A673 (cell line): ENCODE measurements at regions of chr17 and their contacts with region 1.

Region 1: DNA sequence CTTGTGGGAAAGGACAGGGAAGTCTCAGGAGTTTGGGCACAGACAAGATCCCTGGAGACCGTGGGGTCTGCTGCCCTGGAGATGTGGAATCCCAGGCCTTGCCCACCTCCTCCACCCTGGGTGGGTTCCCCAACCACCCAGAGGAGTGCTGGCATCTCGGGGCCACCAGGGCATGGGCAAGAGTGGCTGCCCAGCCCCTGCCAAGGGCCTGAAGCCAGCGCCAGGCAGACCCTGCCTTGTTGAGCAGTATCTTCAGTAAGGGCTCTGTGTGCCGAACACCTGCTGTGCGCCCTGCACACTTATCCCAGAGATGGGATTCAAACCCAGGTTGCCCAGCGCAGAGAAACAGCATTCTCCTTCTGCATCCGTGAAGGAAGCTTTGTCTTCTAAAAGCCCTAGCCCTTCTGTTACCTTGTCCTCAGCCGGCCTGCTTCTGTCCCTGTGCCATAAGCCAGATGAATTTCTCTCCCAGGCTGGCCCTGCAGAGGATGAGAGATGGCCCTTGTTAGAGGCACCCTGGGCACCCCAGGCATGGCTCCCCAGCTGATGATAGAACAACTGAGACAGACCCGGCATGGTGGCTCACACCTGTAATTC is 32.4 kb downstream of the TMEM235 start:
- DNase-seq: no peak
- H3K4me3 ChIP-seq: no peak overlapping the region
- H3K27ac ChIP-seq: no peak overlapping the region
- H3K4me1 ChIP-seq: peaks cover 18% of the 10 kb centered on the region
- H3K27me3 ChIP-seq: no peaks in the 10 kb centered on the region
- CTCF ChIP-seq: no peak

Region 2: DNA sequence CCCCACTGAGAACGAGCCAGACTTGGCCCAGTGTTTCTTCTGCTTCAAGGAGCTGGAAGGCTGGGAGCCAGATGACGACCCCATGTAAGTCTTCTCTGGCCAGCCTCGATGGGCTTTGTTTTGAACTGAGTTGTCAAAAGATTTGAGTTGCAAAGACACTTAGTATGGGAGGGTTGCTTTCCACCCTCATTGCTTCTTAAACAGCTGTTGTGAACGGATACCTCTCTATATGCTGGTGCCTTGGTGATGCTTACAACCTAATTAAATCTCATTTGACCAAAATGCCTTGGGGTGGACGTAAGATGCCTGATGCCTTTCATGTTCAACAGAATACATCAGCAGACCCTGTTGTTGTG is 49.2 kb before region 1 on chr17:
- CTCF ChIA-PET with region 1: interaction called, 18 read pairs
- POLR2A ChIA-PET with region 1: no interaction called
- intact Hi-C with region 1: no loop called
- DNase-seq: peak; percentile 27
- H3K4me3 ChIP-seq: peak overlapping the region; percentile 98
- H3K27ac ChIP-seq: peak overlapping the region; percentile 96
- H3K4me1 ChIP-seq: peaks cover 4% of the 10 kb centered on the region
- H3K27me3 ChIP-seq: no peaks in the 10 kb centered on the region
- CTCF ChIP-seq: no peak